ENCODE measurements at regions of chr16 and their contacts with region 1.

Region 1: DNA sequence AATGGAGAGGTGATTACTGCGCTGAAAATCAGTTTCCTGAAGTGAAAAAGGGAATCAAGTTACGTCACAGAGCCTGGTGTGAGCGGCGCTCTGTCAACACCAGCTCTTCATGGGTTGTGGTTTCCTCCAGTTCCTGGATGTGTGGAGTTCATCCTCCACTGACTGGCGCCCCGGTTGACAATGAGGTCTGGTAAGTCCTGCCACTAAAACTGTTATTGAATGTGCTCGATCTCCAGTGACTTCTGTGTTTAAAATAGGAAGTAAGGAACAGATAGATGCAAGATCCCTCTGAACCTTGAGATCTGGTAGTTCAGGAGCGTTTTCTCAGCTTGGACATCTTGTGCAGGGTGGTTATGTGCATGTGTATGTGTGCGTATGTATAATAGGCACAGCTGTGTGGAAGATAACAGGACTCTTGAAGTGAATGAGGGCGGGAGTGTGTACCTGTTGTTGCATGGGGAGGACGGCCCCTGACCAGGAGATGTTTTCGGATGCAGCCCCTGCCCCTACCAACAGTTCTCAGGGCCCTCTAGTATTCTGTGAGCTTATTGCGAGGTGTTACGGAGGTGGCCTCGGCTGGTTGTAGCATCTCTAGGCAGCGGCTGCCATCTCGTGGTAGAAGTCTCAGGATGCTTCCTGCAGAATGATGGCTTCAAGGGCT is 22.0 kb upstream of the GOT2 start:
- DNase-seq: peak; percentile 72 to 93 (median 86)
- H3K4me3 ChIP-seq: no peak overlapping the region
- H3K27ac ChIP-seq: no peak overlapping the region
- H3K4me1 ChIP-seq: no peaks in the 10 kb centered on the region
- H3K27me3 ChIP-seq: no peaks in the 10 kb centered on the region
- CTCF ChIP-seq: peak; percentile 48 to 83 (median 76)
- POLR2A ChIP-seq: no peak

Region 2: DNA sequence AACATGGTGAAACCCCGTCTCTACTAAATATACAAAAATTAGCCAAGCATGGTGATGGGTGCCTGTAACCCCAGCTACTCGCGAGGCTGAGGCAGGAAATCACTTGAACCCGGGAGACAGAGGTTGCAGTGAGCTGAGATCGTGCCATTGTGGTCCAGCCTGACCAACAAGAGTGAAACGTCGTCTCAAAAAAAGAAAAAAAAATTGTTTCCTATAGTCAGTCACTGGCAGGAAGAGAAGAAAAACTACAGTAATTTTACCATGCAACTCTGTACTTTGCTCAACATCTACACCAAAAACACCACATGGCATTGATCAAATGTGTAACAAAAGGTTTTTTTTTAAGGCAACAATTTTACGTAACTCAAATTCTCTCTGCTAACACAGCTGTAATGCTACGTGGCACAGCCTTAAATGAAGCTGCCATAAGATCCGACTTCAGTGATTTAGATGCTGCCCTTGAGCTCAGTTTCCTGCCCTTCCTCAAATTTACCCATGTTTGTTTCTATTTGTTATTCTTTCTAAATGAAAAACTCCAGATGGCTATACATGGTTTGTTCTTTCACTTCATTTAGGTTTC is 166.7 kb before region 1 on chr16:
- intact Hi-C with region 1: no loop called
- DNase-seq: peak in 1 of 7 donors; percentile 43
- H3K4me3 ChIP-seq: no peak overlapping the region
- H3K27ac ChIP-seq: no peak overlapping the region
- H3K4me1 ChIP-seq: peaks cover 0 to 24% of the 10 kb centered on the region in 2 donors
- H3K27me3 ChIP-seq: no peaks in the 10 kb centered on the region
- CTCF ChIP-seq: no peak
- POLR2A ChIP-seq: no peak

Region 3: DNA sequence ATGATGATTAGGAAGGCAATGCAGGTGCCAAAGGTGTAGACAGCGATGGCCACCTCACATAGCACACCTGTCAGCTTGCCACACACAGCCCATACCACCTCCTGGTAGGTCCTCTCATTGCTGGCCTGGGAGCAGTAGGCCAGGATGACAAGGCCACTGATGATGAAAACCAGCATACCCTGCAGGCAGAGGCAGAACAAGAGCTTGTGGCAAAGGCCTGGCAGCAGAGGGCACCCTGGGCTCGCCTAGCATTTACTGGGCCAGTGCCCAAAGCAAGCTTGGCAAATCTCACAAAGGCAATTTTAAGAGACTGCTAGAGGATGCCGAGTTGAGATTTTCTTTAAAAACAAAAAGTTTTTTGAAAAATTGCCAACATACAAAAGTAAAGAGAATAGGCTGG is 77.4 kb before region 1 on chr16:
- intact Hi-C with region 1: loop called (anchors 5 kb)
- DNase-seq: peak; percentile 71 to 89 (median 79)
- H3K4me3 ChIP-seq: no peak overlapping the region
- H3K27ac ChIP-seq: no peak overlapping the region
- H3K4me1 ChIP-seq: peaks cover 8 to 9% of the 10 kb centered on the region in 2 donors
- H3K27me3 ChIP-seq: no peaks in the 10 kb centered on the region
- CTCF ChIP-seq: peak; percentile 14 to 64 (median 58)
- POLR2A ChIP-seq: no peak

Region 4: DNA sequence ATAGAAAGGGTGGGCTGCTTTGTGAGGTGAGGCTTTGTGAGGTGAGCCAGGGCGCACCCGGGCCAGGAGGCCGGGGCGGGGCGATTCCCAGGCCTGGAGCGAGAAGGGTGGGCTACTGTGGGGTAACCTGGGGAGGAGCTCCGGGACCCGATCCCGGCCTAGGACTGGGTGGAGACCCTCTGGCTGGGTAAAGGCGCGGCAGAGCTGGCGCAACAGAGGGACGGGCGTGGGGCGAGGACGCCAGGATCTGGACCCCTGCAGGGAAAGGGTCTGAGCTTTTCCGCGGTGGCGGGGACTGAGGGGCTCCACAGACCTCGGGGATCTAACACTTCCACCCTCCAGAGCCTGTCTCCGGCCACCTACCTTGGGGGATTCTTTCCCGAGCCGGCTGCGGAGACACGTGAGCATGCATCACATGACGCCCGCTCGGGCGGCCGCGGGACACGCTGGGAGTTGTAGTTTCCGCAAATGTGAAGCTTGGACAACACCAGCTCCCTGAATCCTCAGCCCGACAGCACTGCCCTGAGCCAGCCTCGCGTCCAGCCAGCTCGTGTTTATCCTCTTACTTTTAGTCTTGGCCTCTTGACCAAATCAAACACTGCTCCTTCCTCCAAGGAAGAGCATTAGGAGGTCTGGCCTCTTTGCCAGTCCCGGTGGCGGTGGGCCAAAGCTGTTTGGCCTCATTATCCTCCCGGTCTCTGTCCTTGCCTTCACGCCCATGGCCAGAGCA is 71.6 kb before region 1 on chr16 and contains the start of gene SLC38A7:
- intact Hi-C with region 1: loop called (anchors 5 kb)
- DNase-seq: peak; percentile 87 to 95 (median 90)
- H3K4me3 ChIP-seq: peak within 1 kb of the TSS; percentile 10 to 87 (median 66)
- H3K27ac ChIP-seq: peak within 1 kb of the TSS; percentile 9 to 88 (median 69)
- H3K4me1 ChIP-seq: peaks cover 11 to 19% of the 10 kb centered on the region in 2 donors
- H3K27me3 ChIP-seq: no peaks in the 10 kb centered on the region
- CTCF ChIP-seq: no peak
- POLR2A ChIP-seq: peak in 1 of 2 donors; percentile 47
- total RNA-seq, gene SLC38A7: 14.4 to 56.4 (median 25.9) TPM

Region 5: GRCh38 chr16:58709333-58709732 is 46.8 kb before region 1 on chr16:
- intact Hi-C with region 1: no loop called
- DNase-seq: no peak
- H3K4me3 ChIP-seq: no peak overlapping the region
- H3K27ac ChIP-seq: no peak overlapping the region
- H3K4me1 ChIP-seq: no peaks in the 10 kb centered on the region
- H3K27me3 ChIP-seq: no peaks in the 10 kb centered on the region
- CTCF ChIP-seq: no peak
- POLR2A ChIP-seq: no peak

Region 6: DNA sequence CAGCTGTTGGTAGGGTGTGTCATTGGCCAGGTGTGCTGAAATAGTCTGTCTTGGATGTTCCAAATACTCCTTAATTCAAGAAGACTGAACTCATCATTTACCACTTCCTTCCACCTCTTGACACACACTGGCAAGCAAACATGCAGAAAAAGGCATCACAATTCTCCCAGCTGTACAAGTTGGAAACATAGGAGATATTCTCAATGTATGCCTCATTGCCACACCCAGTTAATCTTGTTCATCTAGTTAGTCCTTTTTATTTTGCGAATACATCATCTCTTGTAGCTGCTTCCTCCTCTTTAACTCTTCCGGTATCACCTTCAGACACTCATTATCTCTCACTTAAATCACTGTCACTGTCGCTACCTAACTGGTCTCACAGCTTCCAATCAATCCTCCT is 53.1 kb after region 1 on chr16:
- intact Hi-C with region 1: no loop called
- DNase-seq: no peak
- H3K4me3 ChIP-seq: no peak overlapping the region
- H3K27ac ChIP-seq: no peak overlapping the region
- H3K4me1 ChIP-seq: no peaks in the 10 kb centered on the region
- H3K27me3 ChIP-seq: no peaks in the 10 kb centered on the region
- CTCF ChIP-seq: no peak
- POLR2A ChIP-seq: no peak

Measured in adrenal gland (tissue), 19 donors.